B cell (primary cell): ENCODE measurements at regions of chr14 and their contacts with region 1.

Region 1: DNA sequence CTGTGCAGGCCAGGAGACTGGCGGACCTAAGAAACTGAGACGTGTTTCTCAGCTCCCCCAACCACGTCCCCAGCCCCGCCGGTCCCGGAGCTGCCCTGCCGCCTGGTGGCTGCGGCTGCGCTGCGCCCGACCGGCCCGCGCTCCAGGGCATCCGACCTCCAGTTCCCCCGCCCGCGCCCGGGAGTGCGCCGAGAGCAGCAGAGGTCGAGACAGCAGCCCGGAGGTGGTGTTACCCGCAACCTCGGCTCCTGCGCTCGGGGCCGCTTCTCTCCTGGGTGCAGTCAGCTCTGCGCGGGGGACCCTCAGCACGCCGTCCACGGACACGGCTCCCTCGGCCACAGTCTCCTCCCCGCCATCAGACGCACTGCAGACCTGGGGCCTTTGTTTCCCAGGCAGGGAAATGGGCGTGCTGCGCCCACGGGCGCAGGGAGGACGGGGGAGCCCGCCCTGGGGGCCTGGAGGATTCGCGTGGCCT is 21.6 kb upstream of the GPR132 start:
- DNase-seq: peak; percentile 89
- ATAC-seq: peak; percentile 86
- H3K4me3 ChIP-seq: peak overlapping the region in 4 of 5 experiments; percentile 55 to 67 (median 60)
- H3K4me3 Mint-ChIP-seq: peak overlapping the region; percentile 85
- H3K27ac ChIP-seq: peak overlapping the region in 1 of 2 donors; percentile 26
- H3K27ac Mint-ChIP-seq: peak overlapping the region; percentile 37
- H3K4me1 ChIP-seq: peaks cover 9 to 17% of the 10 kb centered on the region in 2 donors
- H3K4me1 Mint-ChIP-seq: peaks cover 16% of the 10 kb centered on the region
- H3K27me3 ChIP-seq: peaks cover 0 to 30% (median 9%) of the 10 kb centered on the region in 4 experiments
- H3K27me3 Mint-ChIP-seq: peaks cover 16% of the 10 kb centered on the region
- CTCF ChIP-seq: peak; percentile 78

Region 2: GRCh38 chr14:104876251-104876699 is 210.6 kb before region 1 on chr14:
- CTCF ChIA-PET with region 1: no interaction called
- POLR2A ChIA-PET with region 1: no interaction called
- intact Hi-C with region 1: no loop called
- DNase-seq: peak; percentile 49
- ATAC-seq: peak; percentile 89
- H3K4me3 ChIP-seq: no peak overlapping the region
- H3K4me3 Mint-ChIP-seq: no peak overlapping the region
- H3K27ac ChIP-seq: no peak overlapping the region
- H3K27ac Mint-ChIP-seq: no peak overlapping the region
- H3K4me1 ChIP-seq: peaks cover 0 to 12% of the 10 kb centered on the region in 2 donors
- H3K4me1 Mint-ChIP-seq: peaks cover 10% of the 10 kb centered on the region
- H3K27me3 ChIP-seq: peaks cover 0 to 23% (median 0%) of the 10 kb centered on the region in 4 experiments
- H3K27me3 Mint-ChIP-seq: peaks cover 11% of the 10 kb centered on the region
- CTCF ChIP-seq: no peak

Region 3: GRCh38 chr14:104976198-104977007 is 110.5 kb before region 1 on chr14:
- CTCF ChIA-PET with region 1: interaction called, 8 read pairs
- POLR2A ChIA-PET with region 1: no interaction called
- intact Hi-C with region 1: loop called (anchors 2 kb)
- DNase-seq: peak; percentile 87
- ATAC-seq: peak; percentile 77
- H3K4me3 ChIP-seq: no peak overlapping the region
- H3K4me3 Mint-ChIP-seq: peak overlapping the region; percentile 82
- H3K27ac ChIP-seq: no peak overlapping the region
- H3K27ac Mint-ChIP-seq: peak overlapping the region; percentile 38
- H3K4me1 ChIP-seq: peaks cover 20 to 24% of the 10 kb centered on the region in 2 donors
- H3K4me1 Mint-ChIP-seq: peaks cover 12% of the 10 kb centered on the region
- H3K27me3 ChIP-seq: peaks cover 0 to 32% (median 15%) of the 10 kb centered on the region in 4 experiments
- H3K27me3 Mint-ChIP-seq: peaks cover 29% of the 10 kb centered on the region
- CTCF ChIP-seq: peak; percentile 91

Region 4: DNA sequence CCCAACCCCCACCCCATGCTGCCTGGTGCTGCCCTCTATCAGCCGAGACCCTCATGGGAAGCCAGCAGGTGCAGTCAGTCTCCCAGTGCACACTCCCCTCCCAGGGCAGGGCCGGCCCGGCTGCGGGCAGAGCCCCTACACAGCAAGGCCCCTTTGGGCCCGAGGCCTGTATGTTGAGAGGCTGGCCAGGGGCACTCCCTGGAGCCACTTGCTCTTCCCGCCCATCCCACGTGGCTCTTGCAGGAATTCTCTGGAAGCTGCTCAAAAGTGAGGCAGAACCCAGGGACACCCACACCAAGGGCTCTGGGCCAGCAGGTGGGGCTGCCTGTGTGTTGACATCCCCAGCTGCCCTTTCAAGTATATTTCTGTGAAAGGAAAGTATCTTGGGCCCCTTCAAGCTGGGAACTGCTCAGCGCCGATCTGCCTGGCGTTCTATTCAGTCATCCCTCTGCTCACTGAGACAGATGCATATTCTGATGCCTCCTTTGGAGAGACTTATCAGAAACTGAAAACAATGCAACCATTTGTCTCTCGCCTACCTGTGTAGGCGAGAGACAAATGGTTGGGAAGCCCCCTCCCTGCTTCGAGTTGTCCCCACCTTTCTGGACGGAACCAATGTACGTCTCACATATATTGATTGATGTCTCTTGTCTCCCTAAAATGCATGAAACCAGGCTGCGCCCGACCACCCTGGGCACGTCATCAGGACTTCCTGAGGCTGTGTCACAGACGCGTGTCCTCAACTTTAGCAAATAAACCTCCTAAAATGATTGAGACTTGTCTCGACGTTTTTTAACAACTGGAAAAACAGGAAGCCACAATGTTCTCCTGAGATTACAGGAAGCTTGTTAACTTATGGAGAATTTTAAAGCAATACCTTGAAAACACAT is 27.6 kb before region 1 on chr14:
- CTCF ChIA-PET with region 1: interaction called, 192 read pairs
- POLR2A ChIA-PET with region 1: interaction called, 5 read pairs
- intact Hi-C with region 1: loop called (anchors 1 kb)
- DNase-seq: peak; percentile 66
- ATAC-seq: no peak
- H3K4me3 ChIP-seq: no peak overlapping the region
- H3K4me3 Mint-ChIP-seq: peak overlapping the region; percentile 83
- H3K27ac ChIP-seq: peak overlapping the region; percentile 74 to 98
- H3K27ac Mint-ChIP-seq: peak overlapping the region; percentile 96
- H3K4me1 ChIP-seq: peaks cover 53 to 58% of the 10 kb centered on the region in 2 donors
- H3K4me1 Mint-ChIP-seq: peaks cover 60% of the 10 kb centered on the region
- H3K27me3 ChIP-seq: no peaks in the 10 kb centered on the region
- H3K27me3 Mint-ChIP-seq: no peaks in the 10 kb centered on the region
- CTCF ChIP-seq: peak; percentile 16

Region 5: GRCh38 chr14:105203057-105203531 is 116.2 kb after region 1 on chr14:
- CTCF ChIA-PET with region 1: no interaction called
- POLR2A ChIA-PET with region 1: no interaction called
- intact Hi-C with region 1: loop called (anchors 5 kb)
- DNase-seq: peak; percentile 77
- ATAC-seq: peak; percentile 45
- H3K4me3 ChIP-seq: no peak overlapping the region
- H3K4me3 Mint-ChIP-seq: no peak overlapping the region
- H3K27ac ChIP-seq: no peak overlapping the region
- H3K27ac Mint-ChIP-seq: no peak overlapping the region
- H3K4me1 ChIP-seq: peaks cover 18 to 29% of the 10 kb centered on the region in 2 donors
- H3K4me1 Mint-ChIP-seq: peaks cover 17% of the 10 kb centered on the region
- H3K27me3 ChIP-seq: peaks cover 0 to 53% (median 14%) of the 10 kb centered on the region in 4 experiments
- H3K27me3 Mint-ChIP-seq: peaks cover 18% of the 10 kb centered on the region
- CTCF ChIP-seq: peak; percentile 95

Region 6: GRCh38 chr14:105351920-105352851 is 265.3 kb after region 1 on chr14:
- CTCF ChIA-PET with region 1: interaction called, 12 read pairs
- POLR2A ChIA-PET with region 1: no interaction called
- intact Hi-C with region 1: no loop called
- DNase-seq: peak; percentile 94
- ATAC-seq: peak; percentile 89
- H3K4me3 ChIP-seq: no peak overlapping the region
- H3K4me3 Mint-ChIP-seq: no peak overlapping the region
- H3K27ac ChIP-seq: peak overlapping the region; percentile 44 to 81
- H3K27ac Mint-ChIP-seq: peak overlapping the region; percentile 68
- H3K4me1 ChIP-seq: peaks cover 4 to 13% of the 10 kb centered on the region in 2 donors
- H3K4me1 Mint-ChIP-seq: peaks cover 8% of the 10 kb centered on the region
- H3K27me3 ChIP-seq: no peaks in the 10 kb centered on the region
- H3K27me3 Mint-ChIP-seq: no peaks in the 10 kb centered on the region
- CTCF ChIP-seq: peak; percentile 77

Region 7: GRCh38 chr14:105398044-105398725 is 311.3 kb after region 1 on chr14 and contains the start of gene TEX22:
- CTCF ChIA-PET with region 1: no interaction called
- POLR2A ChIA-PET with region 1: no interaction called
- intact Hi-C with region 1: no loop called
- DNase-seq: peak; percentile 93
- ATAC-seq: peak; percentile 88
- H3K4me3 ChIP-seq: peak within 1 kb of the TSS; percentile 31 to 94 (median 86)
- H3K4me3 Mint-ChIP-seq: peak within 1 kb of the TSS; percentile 90
- H3K27ac ChIP-seq: peak within 1 kb of the TSS; percentile 75 to 86
- H3K27ac Mint-ChIP-seq: peak within 1 kb of the TSS; percentile 91
- H3K4me1 ChIP-seq: peaks cover 16 to 23% of the 10 kb centered on the region in 2 donors
- H3K4me1 Mint-ChIP-seq: peaks cover 16% of the 10 kb centered on the region
- H3K27me3 ChIP-seq: no peaks in the 10 kb centered on the region
- H3K27me3 Mint-ChIP-seq: no peaks in the 10 kb centered on the region
- CTCF ChIP-seq: peak; percentile 36
- total RNA-seq, gene TEX22: 7.0 and 8.4 TPM in 2 replicates